Head of caudate nucleus (tissue), 42 donors: ENCODE measurements at regions of chr3 and their contacts with region 1.

Region 1: GRCh38 chr3:138186803-138187295 is 252 bp upstream of the ARMC8 start:
- DNase-seq: peak; percentile 80 to 96 (median 92)

Region 2: DNA sequence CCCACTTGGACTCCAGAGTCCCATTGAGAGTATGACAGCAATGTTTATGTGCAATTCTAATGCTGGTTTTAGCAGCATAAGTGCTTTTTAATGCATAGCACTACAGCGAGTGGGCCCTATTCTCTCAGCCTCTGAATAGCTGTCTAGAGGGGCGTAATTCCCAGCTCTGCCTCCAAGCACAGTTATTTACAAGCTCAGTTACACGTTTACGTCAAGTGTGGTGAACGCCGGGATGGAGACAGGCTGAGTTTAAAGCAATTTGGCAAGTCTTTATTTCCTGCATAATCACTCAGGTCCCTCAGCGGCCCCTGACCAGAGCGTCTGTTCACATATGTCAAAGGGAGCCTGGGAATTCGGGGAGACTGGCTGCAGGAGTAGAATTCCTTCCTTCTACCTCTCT is 378.9 kb before region 1 on chr3:
- intact Hi-C with region 1: no loop called
- DNase-seq: no peak

Region 3: DNA sequence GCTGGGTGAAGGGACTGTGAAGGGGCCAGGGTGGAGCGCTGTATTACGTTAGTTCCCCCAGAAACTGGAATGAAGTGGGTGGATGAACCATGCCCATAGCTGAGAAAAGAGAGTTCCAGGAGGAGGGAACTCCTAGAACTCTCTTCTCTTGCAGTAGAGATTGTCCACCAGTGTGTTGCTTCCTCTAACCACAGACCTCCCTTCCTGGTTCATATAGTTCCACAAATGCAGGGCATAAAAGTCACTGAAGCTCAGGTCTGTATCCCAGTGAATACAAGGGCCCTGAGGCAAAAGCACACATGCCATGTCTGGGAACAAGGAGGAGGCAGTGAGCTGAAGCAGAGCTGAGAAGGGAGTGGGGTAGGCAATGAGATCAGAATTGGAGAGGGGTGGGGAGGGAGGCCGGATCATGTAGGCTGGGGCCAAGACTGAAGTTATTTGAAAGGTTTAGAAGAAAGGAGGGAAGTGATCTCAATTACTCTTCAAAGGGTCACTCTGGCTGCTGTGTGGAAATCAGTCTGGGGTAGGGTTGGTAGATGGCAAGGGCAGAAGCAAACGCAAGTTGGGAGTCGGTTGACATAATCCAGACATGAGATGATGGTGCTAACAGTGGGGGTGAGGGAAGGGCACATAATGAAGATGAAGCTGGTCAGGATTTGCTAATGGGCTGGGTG is 61.2 kb before region 1 on chr3:
- intact Hi-C with region 1: no loop called
- DNase-seq: peak in 1 of 42 donors; percentile 38

Region 4: GRCh38 chr3:138300647-138301046 is 113.8 kb after region 1 on chr3:
- intact Hi-C with region 1: no loop called
- DNase-seq: peak in 8 of 42 donors; percentile 25 to 57 (median 30)

Region 5: GRCh38 chr3:138329127-138329983 is 142.5 kb after region 1 on chr3 and contains the start of gene NME9:
- intact Hi-C with region 1: loop called (anchors 10 kb)
- DNase-seq: peak; percentile 87 to 98 (median 94)